ENCODE measurements at regions of chr15 and their contacts with region 1.

Region 1: DNA sequence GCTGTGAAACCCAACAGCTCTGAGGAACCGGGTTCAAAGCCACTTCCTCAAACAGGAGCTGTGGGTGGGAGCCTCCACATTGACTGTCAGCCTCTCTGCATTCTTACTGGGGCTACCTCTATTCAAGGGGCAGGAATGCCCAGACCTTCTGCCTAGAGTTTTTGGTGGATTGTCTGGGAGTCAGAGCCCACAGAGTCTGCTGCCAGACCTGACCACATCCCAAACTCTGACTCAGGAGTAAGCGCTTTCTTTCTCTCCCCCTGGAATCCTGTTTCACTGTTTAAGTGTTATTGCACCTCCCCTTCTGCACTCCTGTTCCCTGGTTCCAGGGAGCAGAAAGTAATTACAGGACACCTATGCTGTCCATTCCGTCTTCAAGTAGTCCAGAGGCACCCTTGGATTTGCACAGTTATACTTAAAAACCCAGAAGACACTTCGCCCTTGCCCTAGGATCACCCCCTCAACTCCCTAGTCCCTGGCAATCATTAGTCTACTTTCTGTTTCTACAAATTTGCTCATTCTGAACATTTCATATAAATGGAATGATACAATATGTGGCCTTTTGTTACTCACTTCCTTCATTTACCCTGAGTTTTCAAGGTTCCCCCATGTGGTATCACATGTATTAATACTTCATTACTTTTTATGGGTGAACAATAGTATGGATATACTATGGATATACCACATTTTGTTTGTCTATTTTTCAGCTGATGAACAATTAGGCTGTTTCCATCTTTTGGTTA is 37.9 kb upstream of the TJP1 start:
- DNase-seq: no peak
- ATAC-seq: no peak
- H3K4me3 ChIP-seq: no peak overlapping the region
- H3K4me3 Mint-ChIP-seq: no peak overlapping the region
- H3K27ac ChIP-seq: no peak overlapping the region
- H3K27ac Mint-ChIP-seq: no peak overlapping the region
- H3K4me1 ChIP-seq: no peaks in the 10 kb centered on the region
- H3K4me1 Mint-ChIP-seq: peaks cover 2% of the 10 kb centered on the region
- H3K27me3 ChIP-seq: no peaks in the 10 kb centered on the region
- H3K27me3 Mint-ChIP-seq: peaks cover 19% of the 10 kb centered on the region
- CTCF ChIP-seq: no peak

Region 2: GRCh38 chr15:29805043-29805707 is 55.0 kb before region 1 on chr15:
- CTCF ChIA-PET with region 1: no interaction called
- POLR2A ChIA-PET with region 1: no interaction called
- intact Hi-C with region 1: loop called in 1 of 2 experiments (anchors 10 kb)
- DNase-seq: no peak
- ATAC-seq: no peak
- H3K4me3 ChIP-seq: no peak overlapping the region
- H3K4me3 Mint-ChIP-seq: no peak overlapping the region
- H3K27ac ChIP-seq: no peak overlapping the region
- H3K27ac Mint-ChIP-seq: no peak overlapping the region
- H3K4me1 ChIP-seq: no peaks in the 10 kb centered on the region
- H3K4me1 Mint-ChIP-seq: no peaks in the 10 kb centered on the region
- H3K27me3 ChIP-seq: no peaks in the 10 kb centered on the region
- H3K27me3 Mint-ChIP-seq: peaks cover 33% of the 10 kb centered on the region
- CTCF ChIP-seq: no peak

Measured in CD8-positive, alpha-beta T cell (primary cell).